Cardiac septum (tissue), 1 donor: ENCODE measurements at regions of chr18 and their contacts with region 1.

Region 1: DNA sequence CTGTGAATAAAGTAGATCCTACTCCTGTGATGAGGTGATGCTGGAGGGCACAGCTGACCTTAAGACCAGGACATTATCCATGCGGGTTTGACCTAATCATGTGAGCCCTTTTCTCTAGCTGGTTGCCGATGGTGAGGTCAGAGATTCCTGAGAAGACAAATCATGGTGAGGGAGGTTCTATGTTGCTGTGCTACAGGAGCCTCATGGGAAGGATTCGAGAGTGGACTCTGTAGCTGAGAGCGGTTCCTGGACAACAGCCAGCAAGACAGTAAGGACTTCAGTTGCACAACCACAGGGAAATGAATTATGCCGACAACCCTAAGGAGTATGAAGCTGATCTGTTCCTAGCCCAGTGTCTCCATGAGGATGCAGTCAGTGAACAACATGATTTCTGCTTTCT is 80.4 kb downstream of the EPB41L3 start:
- DNase-seq: no peak

Region 2: GRCh38 chr18:4391859-4392258 is 1071.5 kb before region 1 on chr18:
- intact Hi-C with region 1: no loop called
- DNase-seq: no peak

Region 3: GRCh38 chr18:5546660-5547059 is 83.3 kb after region 1 on chr18:
- intact Hi-C with region 1: loop called (anchors 10 kb)
- DNase-seq: no peak